Endothelial cell of umbilical vein (primary cell): ENCODE measurements at regions of chr14 and their contacts with region 1.

Region 1: GRCh38 chr14:75982266-75983018 is 647 bp upstream of the TGFB3 start:
- DNase-seq: peak; percentile 78
- H3K4me3 ChIP-seq: peak overlapping the region; percentile 66 to 73 (median 68)
- H3K27ac ChIP-seq: peak overlapping the region; percentile 62
- H3K4me1 ChIP-seq: peaks cover 28% of the 10 kb centered on the region
- H3K27me3 ChIP-seq: no peaks in the 10 kb centered on the region
- CTCF ChIP-seq: peak; percentile 32 to 74
- POLR2A ChIP-seq: no peak

Region 2: GRCh38 chr14:74841230-74842207 is 1140.9 kb before region 1 on chr14:
- CTCF ChIA-PET with region 1: no interaction called
- POLR2A ChIA-PET with region 1: no interaction called
- dilution Hi-C with region 1: no loop called
- intact Hi-C with region 1: no loop called
- DNase-seq: no peak
- H3K4me3 ChIP-seq: no peak overlapping the region
- H3K27ac ChIP-seq: no peak overlapping the region
- H3K4me1 ChIP-seq: no peaks in the 10 kb centered on the region
- H3K27me3 ChIP-seq: no peaks in the 10 kb centered on the region
- CTCF ChIP-seq: no peak
- POLR2A ChIP-seq: no peak

Region 3: DNA sequence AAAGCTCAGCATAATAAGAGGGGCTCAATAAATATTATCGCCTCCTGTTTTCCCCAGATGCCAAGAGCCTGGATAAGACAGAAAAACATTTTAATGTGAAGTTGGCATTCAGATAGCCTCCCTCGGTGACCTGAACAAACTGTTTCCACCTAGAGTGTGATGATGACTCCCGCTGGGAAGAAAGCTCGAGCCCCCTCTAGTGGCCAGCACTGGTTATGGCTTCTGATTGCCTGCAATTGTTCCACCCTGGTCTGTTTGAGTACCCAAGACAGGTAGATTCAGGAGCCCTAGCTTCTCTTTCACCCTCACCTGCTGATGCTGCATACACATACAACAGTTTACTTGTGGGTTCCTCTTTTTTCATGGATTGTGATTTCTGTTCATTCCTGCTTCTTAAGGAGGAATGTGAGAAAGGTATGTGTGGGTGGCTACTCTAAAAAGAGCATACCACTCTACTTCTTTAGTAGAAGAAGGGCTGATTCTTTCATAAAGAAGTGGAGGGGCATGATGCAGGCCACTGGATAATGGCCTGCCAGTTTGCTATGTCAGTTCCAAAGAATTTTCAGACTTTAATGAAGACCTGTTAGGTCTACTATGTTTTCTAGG is 328.2 kb before region 1 on chr14:
- CTCF ChIA-PET with region 1: interaction called, 10 read pairs
- POLR2A ChIA-PET with region 1: no interaction called
- dilution Hi-C with region 1: no loop called
- intact Hi-C with region 1: no loop called
- DNase-seq: peak; percentile 77
- H3K4me3 ChIP-seq: no peak overlapping the region
- H3K27ac ChIP-seq: no peak overlapping the region
- H3K4me1 ChIP-seq: peaks cover 6% of the 10 kb centered on the region
- H3K27me3 ChIP-seq: no peaks in the 10 kb centered on the region
- CTCF ChIP-seq: peak; percentile 92 to 94
- POLR2A ChIP-seq: no peak

Region 4: GRCh38 chr14:75720842-75721498 is 261.5 kb before region 1 on chr14:
- CTCF ChIA-PET with region 1: interaction called, 617 read pairs
- POLR2A ChIA-PET with region 1: no interaction called
- dilution Hi-C with region 1: loop called (anchors 25 kb)
- intact Hi-C with region 1: no loop called
- DNase-seq: peak; percentile 59
- H3K4me3 ChIP-seq: no peak overlapping the region
- H3K27ac ChIP-seq: no peak overlapping the region
- H3K4me1 ChIP-seq: no peaks in the 10 kb centered on the region
- H3K27me3 ChIP-seq: no peaks in the 10 kb centered on the region
- CTCF ChIP-seq: no peak
- POLR2A ChIP-seq: no peak

Region 5: GRCh38 chr14:75864352-75864751 is 118.1 kb before region 1 on chr14:
- CTCF ChIA-PET with region 1: interaction called, 20 read pairs
- POLR2A ChIA-PET with region 1: no interaction called
- dilution Hi-C with region 1: no loop called
- intact Hi-C with region 1: no loop called
- DNase-seq: no peak
- H3K4me3 ChIP-seq: no peak overlapping the region
- H3K27ac ChIP-seq: no peak overlapping the region
- H3K4me1 ChIP-seq: peaks cover 32% of the 10 kb centered on the region
- H3K27me3 ChIP-seq: no peaks in the 10 kb centered on the region
- CTCF ChIP-seq: no peak
- POLR2A ChIP-seq: no peak

Region 6: DNA sequence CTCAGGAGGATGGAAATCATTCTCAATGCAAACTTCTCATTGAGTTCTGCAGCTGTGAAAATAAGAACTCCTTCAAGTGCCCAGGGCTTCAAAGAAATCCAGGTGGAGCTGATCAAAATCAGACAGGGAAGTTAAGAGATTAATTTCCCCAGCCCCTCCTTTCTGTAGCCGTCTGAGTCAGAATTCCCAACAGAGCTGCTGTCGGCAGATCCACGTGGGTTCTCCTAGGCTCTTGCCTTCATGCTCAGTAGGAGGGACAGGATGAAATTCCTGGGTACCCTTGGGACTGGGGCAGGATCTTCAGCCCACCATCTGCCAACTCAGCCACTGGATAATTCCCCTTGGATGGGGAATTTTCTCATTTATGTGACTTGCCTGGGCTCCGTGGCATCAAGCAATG is 14.0 kb before region 1 on chr14:
- CTCF ChIA-PET with region 1: interaction called, 26 read pairs
- POLR2A ChIA-PET with region 1: no interaction called
- dilution Hi-C with region 1: no loop called
- intact Hi-C with region 1: no loop called
- DNase-seq: no peak
- H3K4me3 ChIP-seq: no peak overlapping the region
- H3K27ac ChIP-seq: no peak overlapping the region
- H3K4me1 ChIP-seq: no peaks in the 10 kb centered on the region
- H3K27me3 ChIP-seq: no peaks in the 10 kb centered on the region
- CTCF ChIP-seq: no peak
- POLR2A ChIP-seq: no peak

Region 7: GRCh38 chr14:76151398-76152339 is 169.2 kb after region 1 on chr14 and contains the start of gene GPATCH2L:
- CTCF ChIA-PET with region 1: no interaction called
- POLR2A ChIA-PET with region 1: no interaction called
- dilution Hi-C with region 1: no loop called
- intact Hi-C with region 1: loop called (anchors 5 kb)
- DNase-seq: peak; percentile 86
- H3K4me3 ChIP-seq: peak within 1 kb of the TSS; percentile 66 to 89 (median 81)
- H3K27ac ChIP-seq: peak within 1 kb of the TSS; percentile 88
- H3K4me1 ChIP-seq: peaks cover 34% of the 10 kb centered on the region
- H3K27me3 ChIP-seq: peaks cover 8 to 11% of the 10 kb centered on the region in 2 experiments
- CTCF ChIP-seq: no peak
- POLR2A ChIP-seq: peak; percentile 83
- total RNA-seq, gene GPATCH2L: 40.0 and 47.4 TPM in 2 replicates